ENCODE measurements at regions of chr6 and their contacts with region 1.

Region 1: DNA sequence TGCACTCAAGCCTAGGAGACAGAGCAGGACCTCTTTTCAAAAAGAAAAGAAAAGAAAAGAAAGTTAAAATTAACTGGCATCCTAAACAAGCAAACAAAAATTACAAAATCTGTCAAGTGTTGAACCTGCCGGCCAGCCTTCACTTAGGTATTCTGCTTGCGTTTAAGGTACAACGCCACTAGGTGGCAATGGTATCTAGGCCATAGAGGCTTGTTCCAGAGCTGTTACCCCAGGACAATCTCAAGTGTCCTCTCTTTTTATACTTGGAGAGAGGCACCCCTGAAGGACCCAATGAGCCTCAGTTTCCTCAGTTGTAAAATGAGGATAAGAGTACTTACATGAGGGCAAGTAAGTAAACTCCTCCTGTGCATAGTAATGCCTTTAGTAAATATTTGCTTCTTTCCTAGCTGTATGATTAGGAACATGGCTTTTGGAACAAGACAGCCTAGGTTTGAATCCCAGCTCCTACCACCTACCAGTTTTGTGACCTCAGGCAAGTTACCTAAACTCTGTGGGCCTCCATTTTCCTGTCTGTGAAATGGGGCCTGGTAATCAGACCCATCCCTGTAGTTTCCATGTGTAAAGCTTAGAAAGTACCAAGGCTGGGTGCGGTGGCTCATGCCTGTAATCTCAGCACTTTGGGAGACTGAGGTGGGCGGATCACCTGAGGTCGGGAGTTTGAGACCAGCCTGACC is 5.8 kb upstream of the PACSIN1 start:
- DNase-seq: peak; percentile 49
- H3K4me3 ChIP-seq: no peak overlapping the region
- H3K27ac ChIP-seq: no peak overlapping the region
- H3K4me1 ChIP-seq: peaks cover 6% of the 10 kb centered on the region
- H3K27me3 ChIP-seq: no peaks in the 10 kb centered on the region
- CTCF ChIP-seq: peak; percentile 69 to 84

Region 2: GRCh38 chr6:34491091-34491430 is 31.0 kb after region 1 on chr6:
- CTCF ChIA-PET with region 1: no interaction called
- dilution Hi-C with region 1: loop called (anchors 5 kb)
- in situ Hi-C with region 1: no loop called
- intact Hi-C with region 1: no loop called
- DNase-seq: no peak
- H3K4me3 ChIP-seq: no peak overlapping the region
- H3K27ac ChIP-seq: no peak overlapping the region
- H3K4me1 ChIP-seq: no peaks in the 10 kb centered on the region
- H3K27me3 ChIP-seq: no peaks in the 10 kb centered on the region
- CTCF ChIP-seq: no peak

Region 3: DNA sequence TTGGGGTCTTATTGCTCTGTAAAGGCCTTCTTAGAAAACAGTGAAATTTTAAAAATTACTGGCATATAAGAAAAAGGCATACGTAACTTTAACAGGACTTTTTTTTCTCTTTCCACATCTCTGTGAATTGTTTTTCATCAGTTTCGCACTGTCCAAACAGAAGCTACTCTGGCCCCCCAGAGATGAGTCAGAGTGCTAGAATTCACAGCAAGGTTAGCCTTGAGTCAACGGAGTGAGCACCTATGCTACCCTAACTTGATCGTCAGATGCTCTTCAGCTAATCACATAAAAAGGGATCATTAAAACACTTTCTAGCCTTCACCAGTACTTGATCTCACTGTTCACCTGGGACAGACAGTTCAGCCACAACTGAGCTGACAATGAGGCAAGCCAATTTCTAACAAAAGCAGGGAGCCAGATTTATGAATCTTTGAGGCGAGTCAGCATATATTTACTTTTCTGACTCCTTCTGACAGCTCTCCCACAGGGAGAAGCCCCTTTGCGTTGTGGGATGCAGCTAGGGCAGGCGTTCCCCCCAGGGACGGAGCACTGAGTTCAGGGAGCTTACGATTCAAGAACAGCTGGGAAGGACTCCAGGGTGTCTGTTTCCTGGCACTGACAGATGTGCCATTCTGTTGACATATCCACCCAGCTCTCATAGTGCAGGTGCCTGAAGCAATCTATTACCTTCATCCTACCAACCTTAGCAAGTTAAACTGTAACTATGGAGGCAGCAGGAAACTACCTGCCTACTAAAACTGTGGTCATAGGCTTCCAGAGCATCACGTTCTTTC is 142.5 kb after region 1 on chr6:
- CTCF ChIA-PET with region 1: no interaction called
- dilution Hi-C with region 1: no loop called
- in situ Hi-C with region 1: loop called in 1 of 2 experiments (anchors 10 kb)
- intact Hi-C with region 1: no loop called
- DNase-seq: no peak
- H3K4me3 ChIP-seq: no peak overlapping the region
- H3K27ac ChIP-seq: no peak overlapping the region
- H3K4me1 ChIP-seq: peaks cover 6% of the 10 kb centered on the region
- H3K27me3 ChIP-seq: no peaks in the 10 kb centered on the region
- CTCF ChIP-seq: no peak

Region 4: GRCh38 chr6:35139908-35140655 is 680.0 kb after region 1 on chr6:
- CTCF ChIA-PET with region 1: interaction called, 3 read pairs
- dilution Hi-C with region 1: no loop called
- in situ Hi-C with region 1: no loop called
- intact Hi-C with region 1: loop called (anchors 1 kb)
- DNase-seq: peak; percentile 36
- H3K4me3 ChIP-seq: no peak overlapping the region
- H3K27ac ChIP-seq: no peak overlapping the region
- H3K4me1 ChIP-seq: no peaks in the 10 kb centered on the region
- H3K27me3 ChIP-seq: no peaks in the 10 kb centered on the region
- CTCF ChIP-seq: peak; percentile 87 to 89

Measured in mammary epithelial cell (primary cell).